Mammary epithelial cell (primary cell): ENCODE measurements at regions of chr9 and their contacts with region 1.

Region 1: GRCh38 chr9:14251154-14252071 is 62.5 kb downstream of the NFIB start:
- DNase-seq: peak; percentile 94
- H3K4me3 ChIP-seq: peak overlapping the region; percentile 12 to 34 (median 21)
- H3K27ac ChIP-seq: peak overlapping the region; percentile 92
- H3K4me1 ChIP-seq: peaks cover 29% of the 10 kb centered on the region
- H3K27me3 ChIP-seq: no peaks in the 10 kb centered on the region
- CTCF ChIP-seq: peak in 1 of 2 donors; percentile 18

Region 2: GRCh38 chr9:14119694-14120514 is 131.5 kb before region 1 on chr9:
- CTCF ChIA-PET with region 1: no interaction called
- dilution Hi-C with region 1: no loop called
- in situ Hi-C with region 1: no loop called
- intact Hi-C with region 1: loop called (anchors 5 kb)
- DNase-seq: peak; percentile 80
- H3K4me3 ChIP-seq: no peak overlapping the region
- H3K27ac ChIP-seq: peak overlapping the region; percentile 25
- H3K4me1 ChIP-seq: peaks cover 18% of the 10 kb centered on the region
- H3K27me3 ChIP-seq: no peaks in the 10 kb centered on the region
- CTCF ChIP-seq: no peak

Region 3: DNA sequence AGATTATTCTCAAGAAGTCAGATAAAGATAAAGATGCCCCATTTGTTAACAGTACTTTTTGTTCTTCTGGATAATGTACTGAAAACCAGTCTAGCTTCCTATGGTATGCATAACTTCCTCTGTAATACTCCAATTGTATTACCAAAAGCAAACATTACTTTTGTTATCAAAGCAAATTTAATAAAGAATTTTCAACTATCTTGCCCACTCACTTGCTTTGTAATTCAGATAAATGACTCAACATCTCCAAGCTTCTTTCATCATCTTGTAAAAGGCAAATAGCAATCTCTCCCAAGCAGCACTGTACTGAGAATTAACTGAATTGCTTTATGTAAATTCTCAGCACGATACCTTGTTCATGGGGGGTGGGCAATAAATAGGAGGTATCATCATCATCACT is 35.8 kb before region 1 on chr9:
- CTCF ChIA-PET with region 1: no interaction called
- dilution Hi-C with region 1: no loop called
- in situ Hi-C with region 1: no loop called
- intact Hi-C with region 1: loop called (anchors 2 kb)
- DNase-seq: no peak
- H3K4me3 ChIP-seq: no peak overlapping the region
- H3K27ac ChIP-seq: peak overlapping the region; percentile 37
- H3K4me1 ChIP-seq: peaks cover 56% of the 10 kb centered on the region
- H3K27me3 ChIP-seq: no peaks in the 10 kb centered on the region
- CTCF ChIP-seq: no peak

Region 4: GRCh38 chr9:14277244-14277643 is 25.8 kb after region 1 on chr9:
- CTCF ChIA-PET with region 1: no interaction called
- dilution Hi-C with region 1: no loop called
- in situ Hi-C with region 1: no loop called
- intact Hi-C with region 1: loop called (anchors 2 kb)
- DNase-seq: peak; percentile 92
- H3K4me3 ChIP-seq: peak overlapping the region; percentile 5 to 18 (median 10)
- H3K27ac ChIP-seq: peak overlapping the region; percentile 75
- H3K4me1 ChIP-seq: peaks cover 46% of the 10 kb centered on the region
- H3K27me3 ChIP-seq: no peaks in the 10 kb centered on the region
- CTCF ChIP-seq: no peak

Region 5: DNA sequence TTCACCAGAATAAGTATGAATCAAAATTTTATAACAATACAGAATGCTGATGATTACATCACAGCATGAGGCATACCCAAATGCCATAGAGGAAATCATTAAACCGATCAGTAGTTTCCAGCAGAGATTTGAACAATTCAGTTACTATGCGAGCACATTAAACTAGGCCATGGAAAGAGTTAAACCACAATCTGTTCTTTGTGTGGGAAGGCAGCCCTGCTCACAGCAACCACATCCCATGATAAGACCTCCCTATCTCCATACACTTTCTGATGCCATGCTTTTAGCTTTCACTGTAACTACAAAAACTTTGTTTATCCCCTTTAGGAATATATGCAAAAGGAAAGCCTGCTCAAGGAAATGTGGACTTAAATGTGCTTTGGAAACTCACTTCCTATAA is 58.0 kb after region 1 on chr9:
- CTCF ChIA-PET with region 1: no interaction called
- dilution Hi-C with region 1: no loop called
- in situ Hi-C with region 1: no loop called
- intact Hi-C with region 1: loop called (anchors 2 kb)
- DNase-seq: peak; percentile 93
- H3K4me3 ChIP-seq: peak overlapping the region; percentile 39 to 98 (median 95)
- H3K27ac ChIP-seq: peak overlapping the region; percentile 95
- H3K4me1 ChIP-seq: peaks cover 34% of the 10 kb centered on the region
- H3K27me3 ChIP-seq: no peaks in the 10 kb centered on the region
- CTCF ChIP-seq: no peak